CD8-positive, alpha-beta T cell (primary cell): ENCODE measurements at regions of chr20 and their contacts with region 1.

Region 1: DNA sequence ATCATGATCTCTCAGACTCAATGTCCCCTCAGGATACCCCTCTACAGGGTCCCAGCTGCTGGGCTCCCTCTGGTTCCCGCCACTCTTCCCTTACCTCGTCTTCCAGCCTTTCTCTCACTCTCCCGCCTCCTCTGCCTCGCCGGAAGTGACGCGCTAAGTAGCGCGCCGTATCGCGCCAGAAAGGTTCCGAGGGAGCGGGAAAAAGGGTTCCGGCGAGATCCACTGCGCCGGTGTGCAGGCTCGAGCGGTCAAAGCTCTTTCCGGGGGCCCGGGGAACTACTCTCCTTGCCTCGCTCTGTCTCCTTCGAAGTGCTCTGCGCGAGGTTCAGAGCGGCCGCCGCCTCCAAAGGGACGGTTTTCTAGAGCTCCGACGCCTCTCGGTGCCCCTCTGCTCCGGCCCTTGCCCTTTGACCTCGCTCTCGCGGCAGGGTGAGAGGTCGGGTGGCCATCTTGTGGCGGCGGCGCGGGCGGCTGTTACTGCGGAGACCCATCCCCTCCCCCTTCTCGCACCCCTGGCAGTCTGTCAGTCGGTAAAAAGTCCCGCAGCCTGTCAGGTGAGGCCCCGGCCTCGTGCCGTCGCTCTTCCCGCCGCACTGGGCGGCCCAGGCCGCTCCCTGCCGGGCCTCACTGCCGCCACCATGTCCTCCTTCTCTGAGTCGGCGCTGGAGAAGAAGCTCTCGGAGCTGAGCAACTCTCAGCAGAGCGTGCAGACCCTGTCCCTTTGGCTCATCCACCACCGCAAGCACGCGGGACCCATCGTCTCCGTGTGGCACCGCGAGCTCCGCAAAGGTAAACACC is at the starts of genes RPRD1B and TTI1:
- DNase-seq: peak; percentile 77 to 95 (median 88)
- ATAC-seq: peak; percentile 86
- H3K4me3 ChIP-seq: peak within 1 kb of the TSS; percentile 84 to 94
- H3K4me3 Mint-ChIP-seq: peak within 1 kb of the TSS; percentile 98
- H3K27ac ChIP-seq: peak within 1 kb of the TSS; percentile 92 to 98
- H3K27ac Mint-ChIP-seq: peak within 1 kb of the TSS; percentile 98
- H3K4me1 ChIP-seq: peaks cover 51% of the 10 kb centered on the region
- H3K4me1 Mint-ChIP-seq: peaks cover 73% of the 10 kb centered on the region
- H3K27me3 ChIP-seq: no peaks in the 10 kb centered on the region
- H3K27me3 Mint-ChIP-seq: no peaks in the 10 kb centered on the region
- CTCF ChIP-seq: no peak
- total RNA-seq, gene RPRD1B: 73.3 to 79.4 TPM
- total RNA-seq, gene TTI1: 12.6 to 15.7 TPM

Region 2: DNA sequence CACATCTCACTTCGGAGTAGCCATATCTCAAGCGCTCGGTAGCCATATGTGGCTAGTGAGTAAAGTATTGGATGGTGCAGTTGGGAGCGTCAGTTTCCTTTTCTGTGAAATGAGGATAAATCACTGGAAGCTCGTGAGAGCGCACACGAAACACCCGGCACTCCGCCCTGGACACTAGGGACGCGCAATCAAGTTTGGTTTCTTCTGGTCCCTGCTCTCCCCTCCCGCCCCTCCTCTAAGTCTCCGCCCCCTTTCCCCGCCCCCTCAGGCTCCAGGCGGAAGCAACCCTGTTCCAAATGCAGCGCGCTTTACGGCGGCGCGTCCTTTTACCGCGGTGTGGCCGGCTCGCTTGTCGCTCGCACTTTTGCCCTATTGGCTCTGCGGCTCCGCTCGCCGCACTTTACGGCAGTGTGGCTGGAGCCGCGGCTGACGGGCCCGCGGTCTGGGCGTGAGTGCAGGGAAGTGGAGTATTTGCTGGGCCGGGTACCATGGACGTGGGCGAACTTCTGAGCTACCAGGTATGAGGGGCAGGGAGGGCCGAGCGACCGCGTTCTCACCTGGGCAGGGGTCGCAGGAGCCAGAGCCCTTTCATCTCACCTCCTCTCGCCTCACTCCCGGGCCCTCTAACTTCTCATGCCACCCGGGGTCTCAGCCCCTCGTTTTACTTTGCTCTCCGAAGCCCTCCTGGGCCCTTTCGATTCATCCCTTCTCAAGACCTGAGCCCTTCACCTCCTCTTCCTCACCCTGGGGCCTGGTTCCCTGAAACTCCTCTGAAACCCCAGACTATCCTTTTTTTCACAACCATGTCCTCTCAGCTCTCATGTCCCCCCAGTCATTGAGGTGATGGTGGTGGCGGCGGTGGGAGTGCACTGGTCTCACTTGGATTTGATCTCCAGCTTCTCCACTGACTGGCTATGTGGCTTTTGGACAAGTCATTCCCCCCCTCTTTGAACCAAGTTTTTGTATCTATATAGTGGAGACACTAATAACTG is 339.6 kb before region 1 on chr20 and contains the start of gene CTNNBL1:
- CTCF ChIA-PET with region 1: no interaction called
- POLR2A ChIA-PET with region 1: no interaction called
- intact Hi-C with region 1: loop called (anchors 1 to 5 kb)
- DNase-seq: peak; percentile 91 to 98 (median 96)
- ATAC-seq: peak; percentile 99
- H3K4me3 ChIP-seq: peak within 1 kb of the TSS; percentile 76 to 85
- H3K4me3 Mint-ChIP-seq: peak within 1 kb of the TSS; percentile 98
- H3K27ac ChIP-seq: peak within 1 kb of the TSS; percentile 60 to 61
- H3K27ac Mint-ChIP-seq: peak within 1 kb of the TSS; percentile 90
- H3K4me1 ChIP-seq: peaks cover 12% of the 10 kb centered on the region
- H3K4me1 Mint-ChIP-seq: peaks cover 43% of the 10 kb centered on the region
- H3K27me3 ChIP-seq: peaks cover 0 to 7% of the 10 kb centered on the region in 2 experiments
- H3K27me3 Mint-ChIP-seq: peaks cover 16% of the 10 kb centered on the region
- CTCF ChIP-seq: no peak
- total RNA-seq, gene CTNNBL1: 22.4 to 26.8 TPM

Region 3: DNA sequence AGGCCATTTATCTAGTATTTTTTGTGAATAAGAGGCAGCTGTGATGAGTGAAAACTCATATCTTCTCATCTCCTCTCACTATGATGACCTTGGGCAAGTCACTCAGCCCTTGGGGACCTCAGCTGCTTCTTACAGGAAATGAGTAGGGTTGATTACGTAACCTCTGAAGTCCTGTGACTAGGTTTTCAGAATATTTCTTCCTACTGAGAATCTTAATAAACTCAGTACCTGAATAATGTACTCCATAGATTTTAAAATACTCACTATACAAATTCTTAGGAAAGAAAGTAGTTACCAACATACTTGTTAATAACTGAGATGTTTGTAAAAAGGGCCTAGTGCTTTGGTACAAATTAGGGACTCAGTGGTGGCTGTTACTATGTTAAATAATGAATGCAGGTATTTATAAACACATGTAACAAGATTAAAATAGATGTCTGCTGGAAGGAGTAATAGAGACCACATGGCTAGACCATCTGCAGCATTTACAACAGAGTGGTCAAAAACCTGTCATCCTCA is 60.9 kb after region 1 on chr20:
- CTCF ChIA-PET with region 1: no interaction called
- POLR2A ChIA-PET with region 1: no interaction called
- intact Hi-C with region 1: no loop called
- DNase-seq: peak in 4 of 9 experiments; percentile 4 to 74 (median 41)
- ATAC-seq: peak; percentile 69
- H3K4me3 ChIP-seq: no peak overlapping the region
- H3K4me3 Mint-ChIP-seq: no peak overlapping the region
- H3K27ac ChIP-seq: peak overlapping the region in 1 of 2 experiments; percentile 72
- H3K27ac Mint-ChIP-seq: peak overlapping the region; percentile 77
- H3K4me1 ChIP-seq: no peaks in the 10 kb centered on the region
- H3K4me1 Mint-ChIP-seq: peaks cover 32% of the 10 kb centered on the region
- H3K27me3 ChIP-seq: no peaks in the 10 kb centered on the region
- H3K27me3 Mint-ChIP-seq: no peaks in the 10 kb centered on the region
- CTCF ChIP-seq: no peak

Region 4: GRCh38 chr20:38446441-38447209 is 413.1 kb after region 1 on chr20:
- CTCF ChIA-PET with region 1: no interaction called
- POLR2A ChIA-PET with region 1: no interaction called
- intact Hi-C with region 1: loop called in 1 of 2 experiments (anchors 5 kb)
- DNase-seq: peak; percentile 84 to 96 (median 92)
- ATAC-seq: peak; percentile 97
- H3K4me3 ChIP-seq: peak overlapping the region; percentile 84
- H3K4me3 Mint-ChIP-seq: peak overlapping the region; percentile 88
- H3K27ac ChIP-seq: peak overlapping the region; percentile 65 to 83
- H3K27ac Mint-ChIP-seq: peak overlapping the region; percentile 94
- H3K4me1 ChIP-seq: peaks cover 19% of the 10 kb centered on the region
- H3K4me1 Mint-ChIP-seq: peaks cover 25% of the 10 kb centered on the region
- H3K27me3 ChIP-seq: no peaks in the 10 kb centered on the region
- H3K27me3 Mint-ChIP-seq: peaks cover 2% of the 10 kb centered on the region
- CTCF ChIP-seq: peak; percentile 99